Ascending aorta (tissue), 2 donors: ENCODE measurements at regions of chr6 and their contacts with region 1.

Region 1: GRCh38 chr6:18387061-18387721 is at the start of gene RNF144B:
- DNase-seq: peak; percentile 62 to 87
- H3K4me3 ChIP-seq: peak within 1 kb of the TSS; percentile 52 to 67
- H3K27ac ChIP-seq: peak within 1 kb of the TSS; percentile 39 to 63
- H3K4me1 ChIP-seq: peaks cover 0 to 26% of the 10 kb centered on the region in 2 donors
- H3K27me3 ChIP-seq: no peaks in the 10 kb centered on the region
- CTCF ChIP-seq: no peak
- total RNA-seq, gene RNF144B: 52.3 TPM

Region 2: GRCh38 chr6:18323935-18324705 is 63.1 kb before region 1 on chr6:
- intact Hi-C with region 1: loop called (anchors 1 kb)
- DNase-seq: no peak
- H3K4me3 ChIP-seq: no peak overlapping the region
- H3K27ac ChIP-seq: no peak overlapping the region
- H3K4me1 ChIP-seq: peaks cover 0 to 7% of the 10 kb centered on the region in 2 donors
- H3K27me3 ChIP-seq: no peaks in the 10 kb centered on the region
- CTCF ChIP-seq: peak; percentile 71 to 84 (median 74)

Region 3: DNA sequence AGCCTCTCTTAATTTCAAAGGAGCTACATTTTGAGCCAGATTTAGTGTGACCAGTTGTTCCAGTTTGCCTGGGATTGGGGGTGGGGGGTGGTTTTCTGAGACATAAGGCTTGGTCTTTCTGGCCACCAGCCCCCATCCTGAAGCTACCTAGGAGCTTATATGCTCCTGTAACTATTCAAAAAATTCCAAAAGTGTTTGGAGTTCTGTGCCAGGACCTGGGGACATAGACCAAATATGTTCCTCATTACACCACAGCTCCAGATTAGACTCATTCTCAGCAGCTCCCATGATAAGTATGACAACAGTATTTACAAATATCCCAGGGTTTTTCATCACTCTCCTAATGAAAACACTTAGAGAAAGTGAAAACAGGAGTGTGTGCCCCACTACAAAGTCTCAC is 37.8 kb before region 1 on chr6:
- intact Hi-C with region 1: loop called (anchors 5 kb)
- DNase-seq: no peak
- H3K4me3 ChIP-seq: no peak overlapping the region
- H3K27ac ChIP-seq: no peak overlapping the region
- H3K4me1 ChIP-seq: peaks cover 0 to 10% of the 10 kb centered on the region in 2 donors
- H3K27me3 ChIP-seq: no peaks in the 10 kb centered on the region
- CTCF ChIP-seq: no peak

Region 4: GRCh38 chr6:18415671-18416340 is 28.6 kb after region 1 on chr6:
- intact Hi-C with region 1: loop called (anchors 2 kb)
- DNase-seq: no peak
- H3K4me3 ChIP-seq: peak overlapping the region in 1 of 2 donors; percentile 22
- H3K27ac ChIP-seq: peak overlapping the region; percentile 77 to 83
- H3K4me1 ChIP-seq: peaks cover 5 to 15% of the 10 kb centered on the region in 2 donors
- H3K27me3 ChIP-seq: no peaks in the 10 kb centered on the region
- CTCF ChIP-seq: no peak

Region 5: DNA sequence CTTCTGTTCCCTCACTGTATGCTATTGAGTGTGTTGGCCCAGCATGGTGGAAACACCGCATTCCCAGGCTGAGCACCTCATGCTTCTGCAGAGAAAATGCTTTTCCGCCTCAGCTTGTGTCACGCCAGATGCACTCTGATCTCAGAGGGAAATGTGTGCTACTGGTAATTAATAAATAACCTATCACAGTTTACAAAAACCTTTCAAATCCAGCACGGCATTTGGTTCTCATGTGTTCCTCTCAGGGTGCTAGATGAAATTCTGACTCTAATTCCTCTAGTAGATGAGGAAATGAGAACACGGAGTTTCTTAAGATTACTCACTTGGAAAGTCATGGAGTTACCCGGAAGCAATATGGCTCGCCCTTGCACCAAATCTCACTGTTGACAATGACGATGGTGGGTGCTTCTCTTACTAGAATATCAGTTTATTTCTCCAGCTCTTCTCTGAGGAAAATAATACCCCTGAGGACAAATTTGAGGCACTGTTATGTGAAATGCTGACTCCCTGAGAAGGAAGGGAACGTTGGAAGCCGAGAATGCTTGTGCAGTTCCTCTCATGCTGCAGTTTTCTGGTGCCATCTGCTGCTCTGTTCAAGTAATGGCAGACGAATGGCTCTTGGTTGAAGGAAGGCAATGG is 116.5 kb after region 1 on chr6:
- intact Hi-C with region 1: loop called (anchors 5 kb)
- DNase-seq: peak in 1 of 2 donors; percentile 78
- H3K4me3 ChIP-seq: peak overlapping the region; percentile 32 to 55
- H3K27ac ChIP-seq: no peak overlapping the region
- H3K4me1 ChIP-seq: no peaks in the 10 kb centered on the region
- H3K27me3 ChIP-seq: no peaks in the 10 kb centered on the region
- CTCF ChIP-seq: peak; percentile 81 to 95 (median 93)

Region 6: GRCh38 chr6:18561037-18561750 is 174.0 kb after region 1 on chr6:
- intact Hi-C with region 1: no loop called
- DNase-seq: no peak
- H3K4me3 ChIP-seq: no peak overlapping the region
- H3K27ac ChIP-seq: no peak overlapping the region
- H3K4me1 ChIP-seq: no peaks in the 10 kb centered on the region
- H3K27me3 ChIP-seq: no peaks in the 10 kb centered on the region
- CTCF ChIP-seq: no peak

Region 7: GRCh38 chr6:18613319-18613925 is 226.2 kb after region 1 on chr6:
- intact Hi-C with region 1: no loop called
- DNase-seq: no peak
- H3K4me3 ChIP-seq: no peak overlapping the region
- H3K27ac ChIP-seq: no peak overlapping the region
- H3K4me1 ChIP-seq: no peaks in the 10 kb centered on the region
- H3K27me3 ChIP-seq: no peaks in the 10 kb centered on the region
- CTCF ChIP-seq: no peak

Region 8: GRCh38 chr6:18720075-18720474 is 332.9 kb after region 1 on chr6:
- intact Hi-C with region 1: no loop called
- DNase-seq: no peak
- H3K4me3 ChIP-seq: no peak overlapping the region
- H3K27ac ChIP-seq: no peak overlapping the region
- H3K4me1 ChIP-seq: no peaks in the 10 kb centered on the region
- H3K27me3 ChIP-seq: no peaks in the 10 kb centered on the region
- CTCF ChIP-seq: no peak